Gastrocnemius medialis (tissue), 4 donors: ENCODE measurements at regions of chr15 and their contacts with region 1.

Region 1: GRCh38 chr15:84633311-84634227 is 20.5 kb downstream of the WDR73 start:
- DNase-seq: peak; percentile 36 to 61
- ATAC-seq: peak; percentile 66 to 67
- H3K4me3 ChIP-seq: peak overlapping the region; percentile 64 to 85 (median 76)
- H3K27ac ChIP-seq: peak overlapping the region; percentile 83 to 97 (median 92)
- H3K4me1 ChIP-seq: peaks cover 40 to 41% of the 10 kb centered on the region in 2 donors
- H3K27me3 ChIP-seq: no peaks in the 10 kb centered on the region
- CTCF ChIP-seq: peak in 1 of 5 experiments; percentile 19
- POLR2A ChIP-seq: peak; percentile 22 to 34

Region 2: DNA sequence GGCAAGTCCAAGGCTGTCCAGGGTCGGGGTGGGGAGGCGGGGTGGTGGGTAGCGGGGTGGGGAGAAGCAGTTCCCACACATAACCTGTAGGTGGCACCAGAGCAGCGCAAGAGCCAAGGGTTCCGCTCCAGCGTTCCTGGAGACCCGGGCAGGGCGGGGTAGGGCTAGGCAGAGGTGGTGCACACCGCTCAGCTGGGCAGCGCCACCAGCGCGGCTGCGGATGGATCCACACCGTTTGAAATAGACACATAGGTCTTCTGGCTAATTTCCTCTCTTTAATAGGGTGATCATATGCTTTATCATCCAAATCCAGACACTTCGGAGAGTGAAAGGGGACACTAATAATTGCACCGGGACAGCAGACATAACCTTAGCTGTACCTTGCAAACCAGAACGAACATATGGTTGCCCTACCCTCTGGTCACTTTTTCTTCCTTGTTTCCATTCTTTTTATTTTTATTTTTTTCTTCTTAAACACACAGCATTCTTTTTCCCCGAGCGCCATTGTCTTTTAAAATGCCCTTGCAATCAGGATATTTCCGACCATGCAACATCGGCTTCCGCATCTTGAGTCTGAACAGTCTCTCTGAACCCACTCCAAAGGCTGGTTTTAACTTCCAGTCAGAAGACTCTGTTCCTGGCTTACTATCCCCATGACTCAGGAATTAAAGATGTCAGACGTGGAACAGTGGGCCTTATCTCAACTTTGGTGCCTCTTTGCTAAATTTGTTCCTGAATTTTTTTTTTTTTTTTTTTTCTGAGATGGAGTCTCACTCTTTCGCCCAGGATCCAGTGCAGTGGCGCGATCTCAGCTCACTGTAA is 45.3 kb before region 1 on chr15:
- in situ Hi-C with region 1: no loop called
- intact Hi-C with region 1: loop called (anchors 2 kb)
- DNase-seq: peak; percentile 74 to 80
- ATAC-seq: peak; percentile 94 to 95
- H3K4me3 ChIP-seq: peak overlapping the region; percentile 3 to 47 (median 40)
- H3K27ac ChIP-seq: no peak overlapping the region
- H3K4me1 ChIP-seq: peaks cover 5 to 10% of the 10 kb centered on the region in 2 donors
- H3K27me3 ChIP-seq: no peaks in the 10 kb centered on the region
- CTCF ChIP-seq: peak; percentile 40 to 98 (median 72)
- POLR2A ChIP-seq: no peak

Region 3: GRCh38 chr15:84600851-84601838 is 32.4 kb before region 1 on chr15 and contains the start of gene ZSCAN2:
- in situ Hi-C with region 1: no loop called
- intact Hi-C with region 1: loop called (anchors 1 kb)
- DNase-seq: peak; percentile 93 to 96
- ATAC-seq: peak; percentile 93 to 97
- H3K4me3 ChIP-seq: peak within 1 kb of the TSS; percentile 95 to 98 (median 96)
- H3K27ac ChIP-seq: peak within 1 kb of the TSS; percentile 82 to 88 (median 86)
- H3K4me1 ChIP-seq: peaks cover 6 to 9% of the 10 kb centered on the region in 2 donors
- H3K27me3 ChIP-seq: no peaks in the 10 kb centered on the region
- CTCF ChIP-seq: no peak
- POLR2A ChIP-seq: peak in 1 of 2 donors; percentile 13
- total RNA-seq, gene ZSCAN2: 6.1 to 10.3 (median 8.6) TPM

Region 4: GRCh38 chr15:84981054-84981710 is 347.6 kb after region 1 on chr15:
- in situ Hi-C with region 1: no loop called
- intact Hi-C with region 1: loop called (anchors 1 kb)
- DNase-seq: peak; percentile 88 to 94
- ATAC-seq: peak; percentile 74 to 85
- H3K4me3 ChIP-seq: peak overlapping the region; percentile 80 to 94 (median 91)
- H3K27ac ChIP-seq: peak overlapping the region; percentile 96 to 97 (median 96)
- H3K4me1 ChIP-seq: peaks cover 27 to 29% of the 10 kb centered on the region in 2 donors
- H3K27me3 ChIP-seq: no peaks in the 10 kb centered on the region
- CTCF ChIP-seq: peak in 4 of 5 experiments; percentile 9 to 44 (median 40)
- POLR2A ChIP-seq: peak in 1 of 2 donors; percentile 61